ENCODE measurements at regions of chr11 and their contacts with region 1.

Region 1: GRCh38 chr11:46121724-46122477 is 647 bp upstream of the PHF21A start:
- DNase-seq: peak; percentile 79
- H3K4me3 Mint-ChIP-seq: peak overlapping the region; percentile 81
- H3K27ac Mint-ChIP-seq: peak overlapping the region; percentile 85
- H3K4me1 Mint-ChIP-seq: peaks cover 41% of the 10 kb centered on the region
- H3K27me3 Mint-ChIP-seq: no peaks in the 10 kb centered on the region

Region 2: DNA sequence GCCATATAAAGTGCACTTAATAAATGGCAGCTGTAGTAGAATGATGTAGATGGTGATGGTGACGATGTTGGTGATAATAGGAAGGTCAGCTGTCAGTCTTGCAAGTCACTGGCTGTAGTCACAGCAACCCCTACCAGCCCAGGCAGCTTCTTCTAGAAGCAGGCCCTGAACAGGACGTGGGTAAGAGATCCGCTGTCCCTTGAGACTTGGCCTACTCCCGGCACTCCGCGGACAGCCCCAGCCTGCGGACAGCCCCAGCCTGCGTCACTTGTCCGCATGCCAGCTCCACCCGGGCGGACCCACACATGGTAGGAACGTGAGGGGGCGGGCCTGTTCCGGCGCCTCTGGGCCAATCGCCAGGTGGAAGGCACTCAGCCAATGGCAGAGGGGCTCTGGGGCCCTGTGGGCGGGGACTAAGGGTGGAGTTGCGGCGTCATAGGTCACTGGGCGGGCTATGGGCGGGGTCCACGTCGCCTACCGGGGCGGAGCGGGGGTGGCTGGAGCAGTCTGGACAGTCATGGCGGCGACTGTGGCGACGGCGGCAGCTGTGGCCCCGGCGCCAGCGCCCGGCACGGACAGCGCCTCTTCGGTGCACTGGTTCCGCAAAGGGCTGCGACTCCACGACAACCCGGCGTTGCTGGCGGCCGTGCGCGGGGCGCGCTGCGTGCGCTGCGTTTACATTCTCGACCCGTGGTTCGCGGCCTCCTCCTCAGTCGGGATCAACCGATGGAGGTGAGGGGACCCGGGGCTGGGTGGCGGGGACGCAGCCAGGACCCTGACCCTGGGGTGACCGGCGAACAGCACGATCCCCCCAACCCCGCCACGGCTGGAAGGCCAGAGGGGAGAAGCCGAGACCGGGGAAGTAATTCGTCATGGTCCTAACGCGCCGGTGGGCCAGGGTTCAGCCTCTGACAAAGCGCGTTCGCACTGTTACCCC is 274.7 kb before region 1 on chr11 and contains the start of gene CRY2:
- CTCF ChIA-PET with region 1: no interaction called
- intact Hi-C with region 1: loop called (anchors 1 kb)
- DNase-seq: peak; percentile 99
- H3K4me3 Mint-ChIP-seq: peak within 1 kb of the TSS; percentile 78
- H3K27ac Mint-ChIP-seq: peak within 1 kb of the TSS; percentile 63
- H3K4me1 Mint-ChIP-seq: peaks cover 45% of the 10 kb centered on the region
- H3K27me3 Mint-ChIP-seq: no peaks in the 10 kb centered on the region
- total RNA-seq, gene CRY2: 13.9 to 16.2 TPM

Region 3: GRCh38 chr11:45896422-45896984 is 225.4 kb before region 1 on chr11:
- CTCF ChIA-PET with region 1: no interaction called
- intact Hi-C with region 1: no loop called
- DNase-seq: no peak
- H3K4me3 Mint-ChIP-seq: no peak overlapping the region
- H3K27ac Mint-ChIP-seq: no peak overlapping the region
- H3K4me1 Mint-ChIP-seq: peaks cover 2% of the 10 kb centered on the region
- H3K27me3 Mint-ChIP-seq: peaks cover 36% of the 10 kb centered on the region

Region 4: GRCh38 chr11:45917623-45918330 is 204.1 kb before region 1 on chr11 and contains the start of gene PEX16:
- CTCF ChIA-PET with region 1: no interaction called
- intact Hi-C with region 1: loop called (anchors 2 kb)
- DNase-seq: peak; percentile 96
- H3K4me3 Mint-ChIP-seq: peak within 1 kb of the TSS; percentile 88
- H3K27ac Mint-ChIP-seq: peak within 1 kb of the TSS; percentile 96
- H3K4me1 Mint-ChIP-seq: peaks cover 24% of the 10 kb centered on the region
- H3K27me3 Mint-ChIP-seq: peaks cover 3% of the 10 kb centered on the region
- total RNA-seq, gene PEX16: 28.6 to 32.5 TPM

Region 5: DNA sequence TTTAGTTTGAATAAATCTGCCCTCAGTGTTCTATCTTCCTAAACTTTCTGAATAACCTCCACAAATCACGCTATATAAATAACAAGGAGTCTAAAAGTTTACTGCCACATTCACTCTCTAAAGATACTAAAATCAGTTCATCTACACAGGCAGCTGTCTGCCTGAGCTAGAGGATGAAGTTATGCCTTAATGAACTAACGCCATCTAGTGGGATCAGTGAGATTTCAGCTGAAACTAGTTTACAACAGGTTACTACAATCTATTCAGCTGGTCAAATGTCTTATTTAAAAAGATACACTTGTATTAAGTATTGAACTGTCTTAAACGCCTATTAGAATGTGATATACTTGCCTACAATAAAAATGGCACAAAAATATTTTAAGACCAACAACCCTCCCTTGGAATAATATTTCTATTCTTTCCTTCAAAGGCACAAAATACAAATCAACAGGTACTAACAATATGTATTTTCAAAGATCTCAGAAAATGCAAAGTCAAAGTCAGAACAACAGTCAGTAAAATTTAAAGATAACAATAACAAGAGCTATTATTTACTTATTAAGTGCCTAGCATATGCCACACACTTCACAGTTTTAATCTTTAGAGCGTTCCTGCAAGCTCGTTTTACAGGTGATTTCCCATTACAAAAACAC is 115.4 kb before region 1 on chr11:
- CTCF ChIA-PET with region 1: no interaction called
- intact Hi-C with region 1: loop called (anchors 10 kb)
- DNase-seq: peak; percentile 14
- H3K4me3 Mint-ChIP-seq: no peak overlapping the region
- H3K27ac Mint-ChIP-seq: no peak overlapping the region
- H3K4me1 Mint-ChIP-seq: no peaks in the 10 kb centered on the region
- H3K27me3 Mint-ChIP-seq: no peaks in the 10 kb centered on the region

Region 6: GRCh38 chr11:46346886-46347636 is 225.2 kb after region 1 on chr11 and contains the start of gene DGKZ:
- CTCF ChIA-PET with region 1: no interaction called
- intact Hi-C with region 1: loop called (anchors 2 kb)
- DNase-seq: peak; percentile 86
- H3K4me3 Mint-ChIP-seq: peak within 1 kb of the TSS; percentile 84
- H3K27ac Mint-ChIP-seq: peak within 1 kb of the TSS; percentile 92
- H3K4me1 Mint-ChIP-seq: peaks cover 80% of the 10 kb centered on the region
- H3K27me3 Mint-ChIP-seq: no peaks in the 10 kb centered on the region
- total RNA-seq, gene DGKZ: 82.9 to 89.2 TPM

Region 7: DNA sequence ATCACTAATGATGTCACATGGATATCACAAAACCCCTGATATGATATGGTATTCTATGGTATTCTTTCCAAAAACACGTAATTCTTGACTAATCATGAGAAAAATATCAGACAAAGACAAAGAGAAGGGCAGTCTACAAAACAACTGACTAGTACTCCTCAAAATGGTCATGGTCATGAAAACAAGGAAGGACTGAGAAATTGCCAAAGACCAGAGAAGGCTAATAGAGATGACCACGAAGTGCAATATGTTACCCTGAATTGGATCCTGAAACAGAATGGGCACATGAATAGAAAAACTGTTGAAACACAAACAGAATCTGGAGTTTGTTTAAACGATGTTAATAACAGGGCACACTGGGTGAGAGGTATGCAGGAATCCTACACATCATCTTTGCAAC is 714.0 kb after region 1 on chr11:
- CTCF ChIA-PET with region 1: no interaction called
- intact Hi-C with region 1: no loop called
- DNase-seq: no peak
- H3K4me3 Mint-ChIP-seq: no peak overlapping the region
- H3K27ac Mint-ChIP-seq: no peak overlapping the region
- H3K4me1 Mint-ChIP-seq: peaks cover 19% of the 10 kb centered on the region
- H3K27me3 Mint-ChIP-seq: no peaks in the 10 kb centered on the region

Measured in activated naive CD4-positive, alpha-beta T cell treated with anti-CD3 and anti-CD28 coated beads for 36 hours (primary cell).